Right ventricle myocardium inferior (tissue), 1 donor: ENCODE measurements at regions of chr11 and their contacts with region 1.

Region 1: GRCh38 chr11:14312736-14313438 is 46.1 kb downstream of the RRAS2 start:
- DNase-seq: no peak
- ATAC-seq: no peak

Region 2: GRCh38 chr11:14258221-14258935 is 54.5 kb before region 1 on chr11:
- intact Hi-C with region 1: no loop called
- DNase-seq: no peak
- ATAC-seq: no peak

Region 3: DNA sequence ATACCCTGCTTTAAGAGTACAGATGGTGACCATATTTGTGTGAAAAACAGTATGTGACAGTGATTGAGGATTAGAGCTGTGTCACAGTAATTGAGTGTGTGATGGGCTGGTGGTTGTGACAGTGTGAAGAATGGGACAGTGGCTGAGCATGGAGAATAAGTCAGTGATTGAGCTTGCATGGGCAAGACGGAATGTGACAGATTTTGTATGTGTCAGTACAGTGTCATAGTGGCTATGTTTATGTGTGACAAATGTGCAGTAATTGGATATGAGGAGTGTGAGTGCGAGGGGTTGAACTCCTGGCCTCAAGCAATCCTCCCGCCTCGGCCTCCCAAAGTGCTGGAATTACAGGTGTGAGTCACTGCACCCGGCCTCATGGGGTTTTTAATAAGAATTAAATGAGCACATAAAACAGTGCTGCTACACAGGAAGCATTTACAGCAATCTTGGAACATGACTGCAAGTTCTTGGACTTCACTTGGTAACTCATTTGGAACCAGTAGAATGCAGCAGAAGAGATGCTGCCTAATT is 46.7 kb after region 1 on chr11:
- intact Hi-C with region 1: loop called (anchors 5 kb)
- DNase-seq: no peak
- ATAC-seq: no peak